OCI-LY7 (cell line): ENCODE measurements at regions of chr10 and their contacts with region 1.

Region 1: DNA sequence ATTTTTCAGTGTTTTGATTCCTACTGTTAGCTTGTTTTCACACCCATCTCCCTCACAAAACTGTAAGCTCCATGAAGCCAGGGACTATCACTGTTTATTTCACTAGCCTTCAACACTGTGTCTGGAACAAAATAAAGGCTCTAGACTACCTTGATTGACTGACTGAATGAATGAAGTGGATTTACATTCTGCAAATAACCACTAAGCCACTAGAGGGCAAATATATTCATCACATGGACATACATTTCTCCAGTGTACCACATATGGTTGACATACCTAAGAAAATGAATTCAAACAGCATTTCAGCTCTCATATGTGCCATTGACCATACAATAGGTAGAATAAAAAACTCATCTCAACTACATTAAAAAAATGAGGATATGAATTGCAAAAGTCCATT is 185.9 kb downstream of the RAB11FIP2 start:
- DNase-seq: peak; percentile 11
- H3K4me3 ChIP-seq: no peak overlapping the region
- H3K27ac ChIP-seq: no peak overlapping the region
- H3K4me1 ChIP-seq: no peaks in the 10 kb centered on the region
- CTCF ChIP-seq: peak; percentile 73

Region 2: DNA sequence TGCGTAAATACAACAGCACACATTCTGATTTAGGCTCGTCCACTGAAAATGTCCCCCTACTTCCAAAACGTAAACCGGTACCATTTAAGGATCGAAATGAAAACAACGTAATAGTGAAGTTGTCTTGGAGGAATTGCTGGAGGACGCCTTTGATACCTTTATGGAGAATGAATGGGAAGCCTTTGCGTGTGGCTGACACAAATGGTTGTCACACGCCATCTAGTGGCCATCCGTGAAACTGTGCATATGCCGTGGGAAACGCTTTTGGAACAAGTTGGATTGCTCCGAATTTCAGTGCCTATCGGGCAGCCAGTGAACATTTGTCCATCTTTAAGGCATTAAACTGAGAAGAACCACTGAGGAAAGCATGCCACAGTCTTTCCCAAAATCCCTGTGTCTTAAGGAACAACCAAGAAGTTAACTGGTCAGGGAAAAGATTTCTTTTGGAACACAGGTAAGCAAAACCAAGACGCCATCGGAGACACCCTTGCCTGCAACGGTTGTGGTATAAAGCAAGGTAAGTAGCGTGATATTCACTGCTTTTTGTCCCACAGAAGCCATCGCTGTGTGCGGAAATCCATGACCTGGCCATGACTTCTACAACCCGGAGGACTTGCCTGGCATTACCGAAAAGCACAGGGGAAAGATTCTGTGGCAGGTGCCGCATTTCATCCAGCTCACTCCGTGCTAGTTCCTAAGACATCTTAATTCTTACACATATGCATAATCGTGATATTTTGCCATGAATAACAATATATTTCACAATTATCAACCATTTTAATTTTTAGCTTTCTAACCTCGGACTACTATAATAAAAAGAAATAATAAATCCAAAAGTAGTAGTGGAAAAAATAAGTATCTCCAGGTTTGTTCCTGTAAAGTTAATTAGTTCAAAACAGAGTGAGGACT is 380.7 kb after region 1 on chr10:
- CTCF ChIA-PET with region 1: no interaction called
- POLR2A ChIA-PET with region 1: no interaction called
- intact Hi-C with region 1: loop called (anchors 10 kb)
- DNase-seq: peak; percentile 60
- H3K4me3 ChIP-seq: no peak overlapping the region
- H3K27ac ChIP-seq: no peak overlapping the region
- H3K4me1 ChIP-seq: no peaks in the 10 kb centered on the region
- CTCF ChIP-seq: peak; percentile 94

Region 3: DNA sequence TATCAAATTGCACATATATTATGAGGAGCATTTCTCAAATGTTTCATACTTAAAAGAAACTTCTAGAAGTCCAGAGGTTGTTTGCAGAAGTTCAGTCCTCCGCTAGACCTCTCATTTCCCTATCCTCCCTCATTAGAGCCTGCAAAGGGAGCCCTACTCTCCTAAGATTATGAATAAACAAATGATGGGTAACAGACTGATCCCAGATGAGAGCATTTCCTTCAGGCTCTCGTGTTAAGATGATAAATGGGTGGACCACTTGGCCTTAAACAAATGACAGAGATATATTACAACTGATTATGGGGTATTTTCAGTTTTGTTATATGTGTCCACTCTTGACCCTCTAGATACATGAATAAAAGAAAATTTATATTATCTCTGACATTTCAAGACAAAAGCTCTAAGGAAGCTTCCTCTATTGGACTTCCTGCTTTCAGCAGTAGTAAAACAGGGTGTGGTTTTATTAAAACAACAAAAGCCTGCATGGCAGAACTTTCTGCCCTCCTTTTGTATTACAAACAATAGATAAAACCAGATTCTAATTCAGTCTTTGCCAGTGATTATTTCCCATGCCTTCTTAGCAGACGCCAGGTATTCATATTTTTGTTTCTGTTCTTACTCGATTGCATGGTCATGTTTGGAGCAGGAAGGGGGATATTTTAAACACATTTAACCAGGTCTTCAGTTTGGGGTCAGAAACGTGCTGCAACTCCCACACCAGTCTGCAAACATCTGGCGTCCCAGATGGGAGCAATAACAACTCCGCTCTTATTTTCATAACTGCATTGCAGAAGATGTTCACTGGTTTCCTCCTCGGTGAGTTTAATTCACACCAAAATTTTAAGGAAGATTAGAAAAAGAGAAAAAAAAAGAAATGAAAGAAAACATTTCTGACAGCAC is 533.7 kb after region 1 on chr10:
- CTCF ChIA-PET with region 1: no interaction called
- POLR2A ChIA-PET with region 1: no interaction called
- intact Hi-C with region 1: loop called (anchors 10 kb)
- DNase-seq: peak; percentile 27
- H3K4me3 ChIP-seq: peak overlapping the region; percentile 31
- H3K27ac ChIP-seq: no peak overlapping the region
- H3K4me1 ChIP-seq: peaks cover 12% of the 10 kb centered on the region
- CTCF ChIP-seq: no peak